Endothelial cell of umbilical vein (primary cell): ENCODE measurements at regions of chr18 and their contacts with region 1.

Region 1: DNA sequence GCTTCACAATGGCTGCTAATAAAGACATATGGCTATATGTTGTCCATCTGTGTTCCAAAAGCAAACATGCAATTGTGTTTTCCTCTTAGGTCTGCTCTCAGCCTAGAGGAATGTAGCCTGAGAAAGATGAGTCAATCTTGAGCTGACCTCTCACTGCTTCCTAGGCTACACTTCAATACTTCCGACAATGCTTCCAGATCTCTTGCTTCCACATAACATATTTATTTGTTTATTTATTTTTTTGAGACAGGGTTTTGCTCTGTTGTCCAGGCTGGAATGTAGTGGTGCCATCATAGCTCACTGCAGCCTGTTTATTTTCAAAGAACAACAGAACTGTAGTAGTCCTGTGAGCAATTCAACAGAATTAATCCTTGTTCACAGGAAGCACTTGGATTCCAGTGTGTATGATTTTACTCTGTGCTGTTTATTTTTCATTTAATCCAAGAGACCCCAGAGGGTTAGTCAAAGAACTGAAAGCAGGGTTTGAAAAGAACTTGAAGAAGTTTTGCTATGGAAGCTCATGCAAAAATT is 437.9 kb downstream of the TXNL1 start:
- DNase-seq: peak; percentile 93
- H3K4me3 ChIP-seq: no peak overlapping the region
- H3K27ac ChIP-seq: peak overlapping the region; percentile 98
- H3K4me1 ChIP-seq: peaks cover 66% of the 10 kb centered on the region
- H3K27me3 ChIP-seq: no peaks in the 10 kb centered on the region
- CTCF ChIP-seq: no peak
- POLR2A ChIP-seq: no peak

Region 2: DNA sequence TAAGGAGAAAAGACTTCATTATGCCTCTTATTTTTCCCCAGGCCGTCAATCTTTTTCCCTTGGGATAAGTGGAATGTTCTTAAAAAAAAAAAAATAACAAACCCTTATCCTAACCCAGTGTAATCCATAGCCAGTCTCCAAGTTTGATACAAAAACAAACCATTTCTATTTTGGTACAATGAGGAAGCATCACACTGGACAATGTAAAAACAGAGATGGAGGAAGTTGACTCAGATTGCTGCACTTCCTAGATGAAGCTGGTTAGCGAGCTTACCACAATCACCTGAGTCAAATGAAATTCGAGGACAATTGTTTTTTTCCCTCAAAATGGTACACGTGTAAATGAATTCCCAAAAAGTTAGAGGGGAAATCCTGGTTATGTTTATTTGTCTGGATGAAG is 872.1 kb before region 1 on chr18:
- CTCF ChIA-PET with region 1: no interaction called
- POLR2A ChIA-PET with region 1: no interaction called
- dilution Hi-C with region 1: no loop called
- intact Hi-C with region 1: loop called (anchors 5 kb)
- DNase-seq: peak; percentile 96
- H3K4me3 ChIP-seq: peak overlapping the region in 1 of 3 experiments; percentile 19
- H3K27ac ChIP-seq: peak overlapping the region; percentile 92
- H3K4me1 ChIP-seq: peaks cover 69% of the 10 kb centered on the region
- H3K27me3 ChIP-seq: no peaks in the 10 kb centered on the region
- CTCF ChIP-seq: no peak
- POLR2A ChIP-seq: peak; percentile 36

Region 3: GRCh38 chr18:55589625-55590291 is 610.7 kb before region 1 on chr18:
- CTCF ChIA-PET with region 1: no interaction called
- POLR2A ChIA-PET with region 1: no interaction called
- dilution Hi-C with region 1: no loop called
- intact Hi-C with region 1: loop called (anchors 1 kb)
- DNase-seq: peak; percentile 97
- H3K4me3 ChIP-seq: peak overlapping the region; percentile 87 to 100 (median 98)
- H3K27ac ChIP-seq: peak overlapping the region; percentile 96
- H3K4me1 ChIP-seq: peaks cover 23% of the 10 kb centered on the region
- H3K27me3 ChIP-seq: no peaks in the 10 kb centered on the region
- CTCF ChIP-seq: no peak
- POLR2A ChIP-seq: peak; percentile 81

Region 4: GRCh38 chr18:55988537-55988936 is 211.9 kb before region 1 on chr18:
- CTCF ChIA-PET with region 1: no interaction called
- POLR2A ChIA-PET with region 1: no interaction called
- dilution Hi-C with region 1: no loop called
- intact Hi-C with region 1: loop called (anchors 1 kb)
- DNase-seq: peak; percentile 94
- H3K4me3 ChIP-seq: no peak overlapping the region
- H3K27ac ChIP-seq: peak overlapping the region; percentile 81
- H3K4me1 ChIP-seq: peaks cover 10% of the 10 kb centered on the region
- H3K27me3 ChIP-seq: no peaks in the 10 kb centered on the region
- CTCF ChIP-seq: no peak
- POLR2A ChIP-seq: no peak

Region 5: GRCh38 chr18:56124186-56124585 is 76.3 kb before region 1 on chr18:
- CTCF ChIA-PET with region 1: no interaction called
- POLR2A ChIA-PET with region 1: no interaction called
- dilution Hi-C with region 1: no loop called
- intact Hi-C with region 1: loop called (anchors 5 kb)
- DNase-seq: peak; percentile 75
- H3K4me3 ChIP-seq: no peak overlapping the region
- H3K27ac ChIP-seq: no peak overlapping the region
- H3K4me1 ChIP-seq: peaks cover 6% of the 10 kb centered on the region
- H3K27me3 ChIP-seq: no peaks in the 10 kb centered on the region
- CTCF ChIP-seq: no peak
- POLR2A ChIP-seq: no peak

Region 6: GRCh38 chr18:56148373-56148772 is 52.1 kb before region 1 on chr18:
- CTCF ChIA-PET with region 1: no interaction called
- POLR2A ChIA-PET with region 1: no interaction called
- dilution Hi-C with region 1: no loop called
- intact Hi-C with region 1: no loop called
- DNase-seq: no peak
- H3K4me3 ChIP-seq: no peak overlapping the region
- H3K27ac ChIP-seq: no peak overlapping the region
- H3K4me1 ChIP-seq: no peaks in the 10 kb centered on the region
- H3K27me3 ChIP-seq: no peaks in the 10 kb centered on the region
- CTCF ChIP-seq: no peak
- POLR2A ChIP-seq: no peak

Region 7: GRCh38 chr18:56389190-56389589 is 188.7 kb after region 1 on chr18:
- CTCF ChIA-PET with region 1: no interaction called
- POLR2A ChIA-PET with region 1: no interaction called
- dilution Hi-C with region 1: no loop called
- intact Hi-C with region 1: loop called (anchors 5 kb)
- DNase-seq: no peak
- H3K4me3 ChIP-seq: no peak overlapping the region
- H3K27ac ChIP-seq: no peak overlapping the region
- H3K4me1 ChIP-seq: peaks cover 13% of the 10 kb centered on the region
- H3K27me3 ChIP-seq: no peaks in the 10 kb centered on the region
- CTCF ChIP-seq: no peak
- POLR2A ChIP-seq: no peak

Region 8: GRCh38 chr18:56638271-56639093 is 438.0 kb after region 1 on chr18 and contains the start of gene TXNL1:
- CTCF ChIA-PET with region 1: no interaction called
- POLR2A ChIA-PET with region 1: no interaction called
- dilution Hi-C with region 1: no loop called
- intact Hi-C with region 1: loop called (anchors 5 kb)
- DNase-seq: peak; percentile 99
- H3K4me3 ChIP-seq: peak within 1 kb of the TSS; percentile 89 to 92 (median 91)
- H3K27ac ChIP-seq: peak within 1 kb of the TSS; percentile 97
- H3K4me1 ChIP-seq: peaks cover 27% of the 10 kb centered on the region
- H3K27me3 ChIP-seq: no peaks in the 10 kb centered on the region
- CTCF ChIP-seq: no peak
- POLR2A ChIP-seq: peak; percentile 93
- total RNA-seq, gene TXNL1: 70.6 and 81.2 TPM in 2 replicates